BJ (cell line): ENCODE measurements at regions of chr5 and their contacts with region 1.

Region 1: DNA sequence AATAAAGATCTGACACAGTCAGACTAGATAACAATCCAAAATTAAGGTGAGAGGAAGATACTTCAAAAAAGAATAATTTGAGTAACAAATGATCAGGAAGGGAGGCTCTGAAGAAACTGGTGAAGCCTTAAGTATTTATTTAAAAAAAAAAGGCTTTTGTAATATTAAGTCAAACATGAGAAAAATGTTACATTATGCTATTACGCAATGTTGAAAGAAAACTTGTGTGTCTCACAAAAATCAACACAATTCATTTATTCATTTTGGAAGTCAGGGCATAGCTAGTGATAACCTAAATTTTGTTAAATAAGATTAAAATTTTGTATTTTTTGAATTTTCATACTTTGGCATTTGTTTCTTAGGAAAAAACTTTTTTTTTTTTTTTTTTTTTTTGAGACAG is 28.2 kb downstream of the WDR41 start:
- DNase-seq: no peak
- H3K4me3 ChIP-seq: no peak overlapping the region
- H3K27me3 ChIP-seq: no peaks in the 10 kb centered on the region
- CTCF ChIP-seq: no peak

Region 2: DNA sequence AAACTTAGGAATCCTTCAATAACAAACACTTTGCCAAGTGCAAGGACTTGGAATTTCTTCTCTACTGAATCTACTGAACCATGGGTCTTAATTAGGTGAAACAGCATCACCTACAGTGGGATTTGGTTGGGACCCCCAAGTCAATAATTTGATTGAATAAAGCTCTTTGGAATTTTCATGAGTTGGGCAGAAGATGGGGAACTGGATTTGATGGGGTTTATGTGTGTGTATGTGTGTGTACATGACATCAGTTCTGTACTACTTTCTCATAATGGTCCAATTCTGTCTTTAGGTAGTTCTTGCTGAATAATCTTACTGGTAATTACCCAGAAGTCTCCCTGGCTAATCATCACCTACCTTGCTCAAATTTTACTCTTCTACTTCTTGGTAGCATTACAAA is 510.7 kb after region 1 on chr5:
- CTCF ChIA-PET with region 1: no interaction called
- POLR2A ChIA-PET with region 1: interaction called, 16 read pairs
- DNase-seq: no peak
- H3K4me3 ChIP-seq: no peak overlapping the region
- H3K27me3 ChIP-seq: peaks cover 27% of the 10 kb centered on the region
- CTCF ChIP-seq: no peak